Activated CD8-positive, alpha-beta T cell treated with anti-CD3 and anti-CD28 coated beads for 36 hours (primary cell): ENCODE measurements at regions of chr17 and their contacts with region 1.

Region 1: GRCh38 chr17:7004398-7005253 is 7.8 kb upstream of the RNASEK start:
- DNase-seq: peak; percentile 52
- ATAC-seq: peak; percentile 95
- H3K4me3 Mint-ChIP-seq: no peak overlapping the region
- H3K27ac Mint-ChIP-seq: no peak overlapping the region
- H3K4me1 Mint-ChIP-seq: peaks cover 21% of the 10 kb centered on the region
- H3K27me3 Mint-ChIP-seq: no peaks in the 10 kb centered on the region
- CTCF ChIP-seq: peak; percentile 90

Region 2: DNA sequence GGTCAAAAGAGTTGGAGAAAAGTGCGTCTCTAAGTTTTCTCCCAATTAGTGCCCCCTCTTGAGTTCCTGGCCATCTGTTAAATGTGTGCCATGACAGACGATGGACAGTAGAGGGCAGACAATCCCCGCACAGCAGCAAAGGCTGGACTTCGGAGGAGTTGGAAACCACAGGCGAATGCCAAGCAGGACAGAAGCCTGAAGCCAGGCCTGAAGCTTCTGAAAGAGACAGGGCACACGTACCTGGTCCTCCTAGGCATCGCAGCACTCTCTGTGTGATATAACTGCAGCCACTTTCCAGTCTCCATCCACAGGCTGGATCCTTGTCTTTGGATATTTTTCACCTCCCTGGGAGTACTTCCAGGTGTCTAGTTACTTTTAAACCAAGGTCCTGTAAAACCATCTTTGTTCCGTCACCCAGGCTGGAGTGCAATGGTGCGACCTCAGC is 338.5 kb before region 1 on chr17:
- CTCF ChIA-PET with region 1: interaction called, 18 read pairs
- POLR2A ChIA-PET with region 1: no interaction called
- intact Hi-C with region 1: no loop called
- DNase-seq: peak; percentile 63
- ATAC-seq: peak; percentile 81
- H3K4me3 Mint-ChIP-seq: no peak overlapping the region
- H3K27ac Mint-ChIP-seq: no peak overlapping the region
- H3K4me1 Mint-ChIP-seq: peaks cover 20% of the 10 kb centered on the region
- H3K27me3 Mint-ChIP-seq: no peaks in the 10 kb centered on the region
- CTCF ChIP-seq: peak; percentile 93

Region 3: DNA sequence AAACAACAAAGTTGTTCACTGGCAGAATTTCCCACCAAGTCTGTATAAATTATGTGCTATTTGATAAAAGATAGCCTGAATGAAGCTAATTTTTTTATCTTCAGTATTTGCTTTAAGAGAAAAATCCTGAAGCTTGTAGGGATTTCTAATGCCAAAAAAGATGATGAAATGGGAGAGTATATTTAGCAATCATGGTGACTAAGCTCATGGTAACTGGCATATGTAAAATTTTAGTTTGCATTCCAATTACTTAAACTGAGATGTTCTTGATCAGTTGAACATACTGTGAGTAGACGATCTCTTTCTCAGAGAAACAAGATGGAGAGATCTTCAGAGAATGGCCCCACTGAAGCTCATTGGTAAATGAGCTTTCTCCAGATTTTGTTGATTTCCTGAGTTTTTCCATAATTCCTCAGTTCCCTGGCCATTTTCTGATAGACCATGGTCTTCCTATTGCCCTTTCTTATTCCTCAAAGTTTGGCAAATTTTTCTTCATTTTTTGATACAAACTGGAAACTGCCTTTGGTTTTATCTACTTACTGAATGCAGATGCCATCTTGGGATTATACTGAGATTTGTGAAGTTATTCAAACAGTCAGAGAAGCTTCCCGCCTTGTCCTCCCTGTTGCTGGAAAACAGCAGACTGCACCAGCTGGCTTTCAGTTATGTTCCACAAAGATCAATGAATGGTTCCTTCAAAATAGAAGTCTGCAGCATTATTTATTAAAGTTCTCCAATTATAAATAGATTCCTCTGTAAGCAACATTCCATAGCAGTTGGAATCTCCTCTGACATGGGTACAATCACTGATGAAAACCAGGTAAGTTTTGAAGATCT is 77.1 kb before region 1 on chr17:
- CTCF ChIA-PET with region 1: interaction called, 284 read pairs
- POLR2A ChIA-PET with region 1: interaction called, 3 read pairs
- intact Hi-C with region 1: no loop called
- DNase-seq: no peak
- ATAC-seq: no peak
- H3K4me3 Mint-ChIP-seq: no peak overlapping the region
- H3K27ac Mint-ChIP-seq: no peak overlapping the region
- H3K4me1 Mint-ChIP-seq: peaks cover 11% of the 10 kb centered on the region
- H3K27me3 Mint-ChIP-seq: peaks cover 1% of the 10 kb centered on the region
- CTCF ChIP-seq: no peak

Region 4: GRCh38 chr17:6969323-6969726 is 35.3 kb before region 1 on chr17:
- CTCF ChIA-PET with region 1: interaction called, 14 read pairs
- POLR2A ChIA-PET with region 1: no interaction called
- intact Hi-C with region 1: no loop called
- DNase-seq: no peak
- ATAC-seq: peak; percentile 37
- H3K4me3 Mint-ChIP-seq: no peak overlapping the region
- H3K27ac Mint-ChIP-seq: peak overlapping the region; percentile 25
- H3K4me1 Mint-ChIP-seq: no peaks in the 10 kb centered on the region
- H3K27me3 Mint-ChIP-seq: no peaks in the 10 kb centered on the region
- CTCF ChIP-seq: no peak

Region 5: DNA sequence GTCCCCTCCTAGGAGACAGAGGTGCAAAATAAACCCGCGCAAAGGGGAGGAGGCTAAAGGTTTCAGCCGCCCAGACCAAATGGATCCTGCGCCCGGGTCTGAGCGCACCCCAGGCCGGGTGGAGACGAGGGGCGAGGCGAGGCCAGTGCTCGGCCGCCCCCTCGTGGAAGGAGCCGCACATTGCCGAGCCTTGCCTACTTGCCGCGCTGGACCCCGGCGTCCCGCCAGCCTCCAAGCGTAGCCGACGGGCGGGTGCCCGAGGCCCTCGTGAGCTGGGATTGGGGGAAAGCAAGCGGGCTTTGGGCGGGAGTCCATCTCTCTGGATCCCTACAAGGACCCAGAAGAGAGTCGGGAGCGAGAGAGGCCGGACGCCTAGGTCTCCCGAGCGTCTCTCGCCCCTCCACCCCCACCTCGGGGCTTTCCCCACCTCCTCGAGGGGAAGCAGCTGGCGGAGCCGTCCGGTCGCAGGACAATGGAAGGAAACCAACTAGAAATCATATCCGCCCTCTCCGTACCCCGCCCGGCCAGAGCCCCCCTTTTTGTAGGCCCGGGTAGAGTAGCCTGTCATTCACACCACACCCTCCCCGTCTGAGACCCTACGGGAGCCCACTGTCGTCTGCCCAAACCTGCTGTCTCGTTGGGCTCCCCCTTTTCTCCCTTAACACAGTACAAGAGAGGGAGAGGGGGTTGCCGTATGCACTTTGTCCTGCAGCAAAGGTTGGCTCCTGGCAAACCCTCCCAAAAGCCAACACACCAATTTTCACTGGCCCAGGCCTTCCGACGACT is 17.6 kb after region 1 on chr17:
- CTCF ChIA-PET with region 1: interaction called, 52 read pairs
- POLR2A ChIA-PET with region 1: no interaction called
- intact Hi-C with region 1: no loop called
- DNase-seq: peak; percentile 88
- ATAC-seq: peak; percentile 78
- H3K4me3 Mint-ChIP-seq: peak overlapping the region; percentile 72
- H3K27ac Mint-ChIP-seq: peak overlapping the region; percentile 63
- H3K4me1 Mint-ChIP-seq: peaks cover 45% of the 10 kb centered on the region
- H3K27me3 Mint-ChIP-seq: no peaks in the 10 kb centered on the region
- CTCF ChIP-seq: peak; percentile 95

Region 6: DNA sequence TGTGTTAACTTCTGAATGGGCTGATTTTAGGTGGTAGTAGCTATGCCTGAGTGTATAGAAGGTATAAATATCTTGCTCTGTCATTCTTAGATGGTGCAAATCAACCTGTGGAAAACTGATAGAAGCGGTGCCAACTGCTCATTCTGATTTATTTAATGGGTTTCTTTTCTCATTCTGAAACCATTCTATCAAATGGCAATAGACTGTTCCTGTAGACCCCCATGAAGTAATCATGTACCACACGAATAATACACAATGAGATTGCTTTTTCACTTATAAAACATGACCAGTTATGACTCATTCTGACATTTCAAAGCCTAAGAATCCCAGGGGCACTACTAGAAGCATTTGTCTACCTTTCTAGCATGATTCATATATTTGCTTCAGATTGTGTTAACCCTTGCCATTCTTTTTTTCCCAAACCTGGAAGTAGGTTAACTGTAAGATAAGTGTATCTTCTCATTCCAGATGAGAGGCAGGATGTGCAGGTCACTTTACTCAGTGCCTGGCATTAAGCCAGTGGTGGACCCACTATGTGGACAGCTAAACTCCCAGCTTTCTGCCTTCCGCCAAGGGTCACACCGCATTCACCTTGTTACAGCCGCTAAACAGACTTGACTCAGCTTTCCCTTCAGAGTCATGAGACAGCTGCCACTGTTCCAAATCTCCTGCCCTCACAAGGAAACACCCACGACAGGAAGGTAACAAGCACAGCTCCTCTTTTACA is 55.7 kb after region 1 on chr17:
- CTCF ChIA-PET with region 1: no interaction called
- POLR2A ChIA-PET with region 1: no interaction called
- intact Hi-C with region 1: no loop called
- DNase-seq: peak; percentile 74
- ATAC-seq: peak; percentile 92
- H3K4me3 Mint-ChIP-seq: no peak overlapping the region
- H3K27ac Mint-ChIP-seq: peak overlapping the region; percentile 85
- H3K4me1 Mint-ChIP-seq: peaks cover 18% of the 10 kb centered on the region
- H3K27me3 Mint-ChIP-seq: peaks cover 10% of the 10 kb centered on the region
- CTCF ChIP-seq: no peak